ENCODE measurements at regions of chr3 and their contacts with region 1.

Region 1: GRCh38 chr3:57877116-57877515 is 121.0 kb downstream of the SLMAP start:
- DNase-seq: no peak

Region 2: DNA sequence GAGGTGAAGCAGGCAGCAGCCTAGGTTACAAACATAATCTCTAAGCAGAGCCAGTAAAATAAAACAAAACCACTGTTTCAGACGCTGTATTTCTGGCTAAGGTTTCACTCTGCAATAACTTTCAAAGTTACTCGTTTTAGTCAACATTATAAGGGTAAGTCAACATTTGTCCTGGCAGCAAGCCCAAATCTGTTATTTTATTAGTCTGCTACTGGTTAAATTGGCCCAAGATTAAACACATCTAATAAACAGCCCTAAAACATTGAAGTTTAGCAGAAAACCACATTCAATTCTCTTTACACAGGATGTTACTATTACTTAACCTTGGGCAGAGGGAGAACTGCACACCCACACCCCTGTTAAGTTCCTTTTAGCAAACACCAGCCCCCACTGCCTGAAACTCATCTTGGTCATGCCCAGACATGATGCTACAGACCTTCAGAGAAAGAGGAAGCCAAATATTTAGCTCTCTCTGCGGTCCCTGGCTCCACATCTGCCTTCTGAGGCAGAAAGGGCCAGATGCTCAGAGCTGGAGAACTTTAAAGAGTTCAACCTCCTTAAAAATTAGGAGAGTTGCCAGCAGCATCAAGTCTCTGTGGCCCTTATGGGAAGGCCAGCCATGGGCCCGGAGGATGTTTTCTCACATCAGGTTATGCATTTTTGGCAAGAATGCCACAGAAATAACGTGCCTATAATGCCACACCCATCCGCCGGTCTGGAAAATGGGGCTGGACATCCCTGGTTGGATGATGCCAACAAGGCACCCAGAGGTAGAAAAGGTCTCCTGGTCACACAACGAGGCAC is 1093.3 kb before region 1 on chr3:
- intact Hi-C with region 1: no loop called
- DNase-seq: no peak

Region 3: GRCh38 chr3:57896031-57896430 is 18.9 kb after region 1 on chr3:
- intact Hi-C with region 1: loop called in 1 of 2 experiments (anchors 1 kb)
- DNase-seq: no peak

Region 4: DNA sequence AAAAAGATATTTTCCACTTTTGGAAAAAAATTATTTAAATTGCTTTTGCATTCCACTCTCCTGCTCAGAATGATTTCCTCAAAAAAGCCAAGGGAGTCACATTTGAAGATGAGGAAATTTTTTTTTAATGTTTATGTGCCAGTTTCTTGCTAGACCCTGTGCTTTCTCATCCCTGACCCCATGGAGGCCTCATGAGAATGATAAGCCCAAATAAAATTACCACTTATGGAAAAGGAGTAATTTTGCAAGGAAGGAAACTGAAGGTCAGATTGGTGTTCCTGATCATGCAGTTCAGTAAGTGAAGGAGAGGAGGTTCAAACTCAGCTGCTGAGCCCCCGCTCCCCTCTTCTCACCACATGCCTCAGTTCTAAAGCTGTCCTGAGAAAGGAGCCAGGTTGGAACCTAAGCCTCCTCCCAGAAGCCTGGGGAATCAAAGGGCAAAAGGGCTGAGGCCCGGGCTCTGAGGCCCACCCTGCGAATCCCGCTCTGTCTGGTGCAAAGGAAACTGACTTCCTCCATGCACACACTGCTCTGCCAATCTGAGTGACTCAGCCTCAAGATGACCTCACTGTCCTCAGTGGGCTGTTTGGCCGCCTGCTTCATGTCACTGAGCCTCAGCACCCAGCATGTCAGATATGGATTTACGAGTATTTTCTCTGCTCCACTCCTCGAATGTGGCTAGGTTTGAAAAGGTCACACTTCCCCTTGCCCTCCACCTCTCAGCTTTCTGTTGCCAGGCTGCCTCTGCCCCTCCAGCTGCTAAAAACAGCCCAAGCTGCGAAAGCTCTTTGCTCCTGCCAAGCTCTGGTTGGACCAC is 74.2 kb after region 1 on chr3:
- intact Hi-C with region 1: no loop called
- DNase-seq: peak; percentile 94

Region 5: DNA sequence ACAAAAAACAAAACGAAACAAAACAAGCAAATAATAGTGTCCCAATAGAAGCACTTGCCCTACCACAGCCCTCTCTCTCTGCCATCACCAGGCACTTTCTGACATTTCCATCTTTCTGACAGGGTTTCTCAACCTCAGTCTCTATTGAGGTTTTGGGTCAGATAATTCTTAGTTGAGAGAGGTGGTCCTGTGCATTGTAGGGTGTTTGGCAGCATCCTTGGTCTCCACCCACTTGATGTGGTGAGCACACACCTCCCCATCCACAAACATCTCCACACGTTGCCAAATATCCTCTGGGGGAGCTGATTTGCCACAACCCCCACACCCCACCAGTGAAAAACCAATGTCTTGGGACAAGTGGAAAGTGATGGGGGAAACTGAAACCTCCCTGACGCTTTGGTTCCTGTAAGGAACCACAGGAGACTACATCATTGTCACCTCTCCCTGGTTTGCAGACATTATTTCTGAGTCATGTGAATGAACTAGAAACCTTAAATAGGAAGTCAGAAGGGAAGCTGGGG is 1906.4 kb after region 1 on chr3:
- intact Hi-C with region 1: loop called in 1 of 2 experiments (anchors 10 kb)
- DNase-seq: no peak

Measured in posterior vena cava (tissue), 2 donors.